Ovary (tissue), 10 donors: ENCODE measurements at regions of chr15 and their contacts with region 1.

Region 1: DNA sequence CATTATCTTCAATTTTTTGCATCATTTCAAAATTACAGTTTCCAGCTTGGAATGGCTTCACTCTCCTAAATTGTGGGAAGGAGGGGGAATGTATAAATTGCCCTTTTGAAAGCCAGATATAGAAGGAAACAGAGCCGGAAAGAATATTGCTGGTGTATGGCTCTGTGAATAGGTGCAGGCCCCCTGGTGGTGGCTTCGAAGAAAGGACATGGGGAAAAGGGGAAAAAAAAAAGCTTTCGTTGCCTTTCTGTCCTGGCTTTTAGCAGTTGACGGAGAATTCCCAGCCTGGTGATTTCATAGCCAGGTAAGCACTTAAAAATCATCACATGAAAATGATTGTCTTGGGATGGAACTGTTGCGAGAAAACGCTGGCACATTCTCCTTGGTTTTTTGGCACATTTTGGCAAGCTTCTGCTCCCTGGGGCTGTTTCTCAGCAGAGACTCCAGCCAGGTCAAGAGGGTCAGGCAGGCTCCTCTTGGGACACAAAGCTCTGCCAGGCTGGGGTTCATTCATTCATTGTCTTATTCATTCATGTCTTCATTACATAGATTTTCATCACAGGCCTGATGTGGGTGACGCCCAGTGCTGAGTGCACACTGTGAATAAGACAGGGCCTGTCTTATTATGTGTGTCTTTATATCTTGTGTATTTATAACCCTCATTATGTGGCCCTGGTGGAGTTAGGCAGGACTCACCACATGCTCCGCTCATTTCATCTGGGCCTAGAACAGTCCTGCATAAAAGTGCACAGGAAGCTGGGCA is 300.0 kb upstream of the TPM1 start:
- DNase-seq: peak; percentile 55 to 73 (median 66)
- H3K4me3 ChIP-seq: no peak overlapping the region
- H3K27ac ChIP-seq: peak overlapping the region; percentile 1 to 22
- H3K4me1 ChIP-seq: peaks cover 2% of the 10 kb centered on the region
- H3K27me3 ChIP-seq: no peaks in the 10 kb centered on the region
- CTCF ChIP-seq: peak; percentile 55 to 77 (median 65)
- EP300 ChIP-seq: no peak
- POLR2A ChIP-seq: no peak

Region 2: DNA sequence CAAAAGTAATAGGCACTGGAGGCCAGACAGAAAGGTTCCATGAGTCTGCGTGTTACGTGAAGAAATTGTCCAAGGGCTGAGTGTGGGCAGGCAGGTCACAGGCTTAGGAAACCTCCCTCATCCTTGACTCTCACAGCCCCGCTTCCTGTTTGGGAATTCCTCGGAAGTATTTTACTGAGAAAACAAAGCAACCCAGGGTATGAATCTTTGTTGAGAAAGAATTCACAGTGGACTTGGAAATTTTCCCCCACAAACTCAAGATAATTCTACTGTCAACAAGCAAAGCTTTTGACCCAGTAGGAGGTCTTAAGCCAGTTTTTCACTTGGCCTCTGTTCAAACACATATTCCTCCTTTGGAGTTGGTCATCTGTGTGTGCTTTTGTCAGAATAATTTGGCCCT is 77.1 kb before region 1 on chr15:
- intact Hi-C with region 1: loop called in 1 of 4 experiments (anchors 2 kb)
- DNase-seq: peak in 1 of 5 donors; percentile 36
- H3K4me3 ChIP-seq: no peak overlapping the region
- H3K27ac ChIP-seq: no peak overlapping the region
- H3K4me1 ChIP-seq: no peaks in the 10 kb centered on the region
- H3K27me3 ChIP-seq: no peaks in the 10 kb centered on the region
- CTCF ChIP-seq: no peak
- EP300 ChIP-seq: no peak
- POLR2A ChIP-seq: no peak

Region 3: DNA sequence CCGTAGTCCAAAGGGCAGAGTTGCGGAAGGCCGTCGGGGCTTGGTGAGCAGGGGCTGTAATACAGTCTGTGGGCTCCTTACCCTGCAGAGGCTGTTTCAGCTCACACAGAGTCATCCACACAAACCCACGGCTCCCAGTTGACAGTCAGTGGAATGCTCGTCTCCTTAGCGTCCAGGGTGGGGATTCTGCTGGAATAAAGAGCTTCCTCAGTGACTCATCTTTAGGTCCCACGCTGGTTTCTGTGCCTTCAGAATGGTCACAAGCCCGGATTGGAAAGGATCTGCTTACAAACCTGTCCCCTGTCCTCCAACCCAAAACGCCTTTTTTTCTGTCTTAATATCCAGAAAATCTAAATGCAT is 98.7 kb after region 1 on chr15:
- intact Hi-C with region 1: no loop called
- DNase-seq: no peak
- H3K4me3 ChIP-seq: no peak overlapping the region
- H3K27ac ChIP-seq: no peak overlapping the region
- H3K4me1 ChIP-seq: no peaks in the 10 kb centered on the region
- H3K27me3 ChIP-seq: no peaks in the 10 kb centered on the region
- CTCF ChIP-seq: no peak
- EP300 ChIP-seq: no peak
- POLR2A ChIP-seq: no peak